WTC11 (cell line): ENCODE measurements at regions of chr2 and their contacts with region 1.

Region 1: GRCh38 chr2:30165050-30165520 is 18.3 kb downstream of the YPEL5 start:
- DNase-seq: peak; percentile 54
- ATAC-seq: peak; percentile 97
- H3K4me3 Mint-ChIP-seq: no peak overlapping the region
- H3K27ac Mint-ChIP-seq: no peak overlapping the region
- H3K4me1 Mint-ChIP-seq: peaks cover 22% of the 10 kb centered on the region
- H3K27me3 Mint-ChIP-seq: no peaks in the 10 kb centered on the region
- CTCF ChIP-seq: peak; percentile 73

Region 2: GRCh38 chr2:29902356-29902755 is 262.7 kb before region 1 on chr2:
- CTCF ChIA-PET with region 1: no interaction called
- POLR2A ChIA-PET with region 1: no interaction called
- DNase-seq: peak; percentile 32
- ATAC-seq: peak; percentile 61
- H3K4me3 Mint-ChIP-seq: no peak overlapping the region
- H3K27ac Mint-ChIP-seq: no peak overlapping the region
- H3K4me1 Mint-ChIP-seq: peaks cover 48% of the 10 kb centered on the region
- H3K27me3 Mint-ChIP-seq: peaks cover 27% of the 10 kb centered on the region
- CTCF ChIP-seq: no peak

Region 3: DNA sequence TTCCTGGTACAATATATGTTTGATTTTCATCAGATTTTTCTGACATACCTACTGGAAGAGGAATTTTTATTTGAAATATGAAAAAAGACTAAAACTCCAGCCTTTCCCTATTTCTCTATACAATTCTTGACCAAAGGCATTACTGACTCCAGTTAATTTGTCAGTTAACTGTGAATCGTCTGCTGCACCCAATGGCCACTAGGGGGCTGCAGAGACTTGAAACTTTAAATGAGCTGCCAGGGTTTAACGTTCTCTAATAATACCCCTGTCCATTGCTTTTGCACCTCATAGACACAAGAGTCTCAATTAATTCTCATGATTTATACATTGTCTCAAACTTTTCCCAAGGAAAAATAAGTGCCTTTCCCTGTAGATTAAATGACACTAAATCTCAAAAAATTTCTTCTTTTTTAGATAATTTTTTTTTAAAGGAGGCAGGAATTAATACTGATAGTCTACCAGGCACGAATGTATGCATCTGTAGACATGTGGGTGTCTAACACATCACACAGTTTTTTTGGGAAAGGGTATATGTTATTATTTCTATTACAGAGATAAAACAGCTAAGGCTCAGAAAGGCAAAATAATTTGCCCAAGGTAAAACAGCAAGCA is 241.9 kb before region 1 on chr2:
- CTCF ChIA-PET with region 1: no interaction called
- POLR2A ChIA-PET with region 1: no interaction called
- DNase-seq: peak; percentile 69
- ATAC-seq: no peak
- H3K4me3 Mint-ChIP-seq: no peak overlapping the region
- H3K27ac Mint-ChIP-seq: no peak overlapping the region
- H3K4me1 Mint-ChIP-seq: peaks cover 13% of the 10 kb centered on the region
- H3K27me3 Mint-ChIP-seq: peaks cover 41% of the 10 kb centered on the region
- CTCF ChIP-seq: peak; percentile 91

Region 4: DNA sequence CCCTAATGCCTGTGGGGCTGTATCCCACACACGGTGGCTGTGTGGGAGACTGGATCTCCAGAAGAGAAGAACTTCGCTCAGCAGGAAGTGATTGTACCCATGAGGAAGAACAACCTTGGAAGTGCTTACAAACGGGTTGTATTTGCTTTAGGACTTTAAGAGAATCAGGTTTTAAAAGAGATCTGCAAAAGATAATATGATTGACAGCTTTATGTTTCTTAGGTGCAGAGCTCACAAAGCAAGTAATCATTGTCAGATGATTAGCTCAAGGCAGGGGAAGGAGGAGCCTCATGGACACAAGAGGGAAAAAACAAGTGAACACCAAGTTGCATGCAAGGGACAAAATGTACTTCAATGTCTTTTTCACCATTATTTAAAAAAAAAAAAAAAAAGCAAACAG is 197.8 kb before region 1 on chr2:
- CTCF ChIA-PET with region 1: no interaction called
- POLR2A ChIA-PET with region 1: no interaction called
- DNase-seq: no peak
- ATAC-seq: no peak
- H3K4me3 Mint-ChIP-seq: no peak overlapping the region
- H3K27ac Mint-ChIP-seq: no peak overlapping the region
- H3K4me1 Mint-ChIP-seq: peaks cover 16% of the 10 kb centered on the region
- H3K27me3 Mint-ChIP-seq: peaks cover 3% of the 10 kb centered on the region; the same call in 1 of the 2 replicates
- CTCF ChIP-seq: no peak

Region 5: DNA sequence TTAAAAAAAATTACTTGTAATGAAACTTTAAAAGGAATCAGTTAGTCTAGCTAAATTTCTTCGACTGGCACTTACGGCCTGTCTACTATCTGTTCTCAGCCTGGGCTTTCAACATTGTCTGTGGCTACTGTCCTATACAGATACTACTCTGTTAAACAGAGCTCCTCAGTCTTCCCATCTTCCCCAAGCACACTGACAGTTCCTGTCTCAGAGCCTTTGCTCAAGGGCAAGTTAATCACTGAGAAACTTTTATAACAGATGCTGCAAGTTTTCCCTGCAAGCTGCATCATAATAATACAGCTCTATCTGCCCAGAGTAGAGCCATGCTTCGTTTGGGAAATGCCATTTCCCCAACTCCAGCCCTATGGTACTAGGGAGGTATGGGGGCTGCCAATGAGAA is 29.5 kb before region 1 on chr2:
- CTCF ChIA-PET with region 1: no interaction called
- POLR2A ChIA-PET with region 1: no interaction called
- DNase-seq: no peak
- ATAC-seq: no peak
- H3K4me3 Mint-ChIP-seq: no peak overlapping the region
- H3K27ac Mint-ChIP-seq: no peak overlapping the region
- H3K4me1 Mint-ChIP-seq: no peaks in the 10 kb centered on the region
- H3K27me3 Mint-ChIP-seq: peaks cover 2% of the 10 kb centered on the region; the same call in 1 of the 2 replicates
- CTCF ChIP-seq: no peak

Region 6: DNA sequence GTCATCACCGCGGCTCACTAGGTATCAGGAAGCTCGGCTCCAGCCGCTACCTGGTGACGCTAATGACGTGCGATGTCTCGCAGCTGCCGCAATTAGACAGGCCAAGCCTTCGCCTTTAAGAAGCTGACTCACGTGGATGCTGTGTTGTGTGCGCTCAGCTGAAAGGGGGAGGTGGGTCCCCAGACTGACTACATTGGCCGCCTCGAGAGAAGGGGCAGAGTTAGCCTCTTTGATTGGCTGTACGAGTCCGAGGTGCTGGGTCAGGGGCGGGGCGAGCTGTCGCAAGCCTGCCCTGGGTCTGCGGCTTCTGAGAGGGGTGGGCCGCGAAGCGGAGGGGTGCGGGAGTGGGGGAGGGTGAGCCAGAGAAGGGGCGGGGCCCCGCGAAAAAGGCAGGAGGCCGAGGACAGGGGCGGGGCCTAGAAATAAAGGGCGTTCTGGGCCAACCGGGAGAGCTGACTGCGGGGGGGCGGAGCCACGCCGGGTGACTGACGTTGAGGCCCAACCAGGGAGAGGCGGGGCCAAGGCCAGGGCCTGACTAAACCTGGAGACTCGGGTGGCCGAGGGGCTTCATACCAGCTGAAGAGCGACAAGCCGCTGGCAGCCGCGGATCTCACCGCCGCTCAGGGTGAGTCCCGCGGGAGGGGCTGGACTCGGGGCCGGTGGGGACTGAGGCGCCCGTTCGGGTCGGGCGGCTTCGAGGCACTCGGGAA is 18.5 kb before region 1 on chr2 and contains the start of gene YPEL5:
- CTCF ChIA-PET with region 1: interaction called, 113 read pairs
- POLR2A ChIA-PET with region 1: interaction called, 9 read pairs
- DNase-seq: peak; percentile 99
- ATAC-seq: peak; percentile 96
- H3K4me3 Mint-ChIP-seq: peak within 1 kb of the TSS; percentile 86
- H3K27ac Mint-ChIP-seq: peak within 1 kb of the TSS; percentile 92
- H3K4me1 Mint-ChIP-seq: peaks cover 41% of the 10 kb centered on the region
- H3K27me3 Mint-ChIP-seq: peaks cover 13% of the 10 kb centered on the region
- CTCF ChIP-seq: no peak
- total RNA-seq, gene YPEL5: 25.3 to 27.3 TPM (median 26.5 TPM) in 3 replicates

Region 7: DNA sequence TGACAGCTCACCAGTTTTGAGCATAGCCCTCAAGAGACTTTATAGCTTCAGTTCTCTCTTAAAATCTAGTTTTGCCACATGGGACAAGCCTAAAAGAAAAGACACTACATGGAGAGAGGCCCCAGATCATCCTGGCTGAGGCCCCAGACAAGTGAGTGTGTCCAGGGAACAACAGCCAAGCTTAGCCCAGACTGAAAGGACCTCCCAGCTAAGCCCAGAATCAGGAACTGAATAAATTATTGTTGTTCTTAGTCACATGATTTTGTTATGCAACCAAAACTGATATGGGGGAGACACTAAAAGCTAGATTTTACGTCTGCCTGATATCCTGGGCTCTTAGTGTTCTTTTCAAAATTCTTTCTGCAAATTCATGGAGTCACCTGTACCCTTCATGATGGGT is 36.9 kb after region 1 on chr2:
- CTCF ChIA-PET with region 1: interaction called, 40 read pairs
- POLR2A ChIA-PET with region 1: no interaction called
- DNase-seq: no peak
- ATAC-seq: no peak
- H3K4me3 Mint-ChIP-seq: no peak overlapping the region
- H3K27ac Mint-ChIP-seq: no peak overlapping the region
- H3K4me1 Mint-ChIP-seq: no peaks in the 10 kb centered on the region
- H3K27me3 Mint-ChIP-seq: no peaks in the 10 kb centered on the region
- CTCF ChIP-seq: no peak

Region 8: GRCh38 chr2:30231212-30231995 is 66.3 kb after region 1 on chr2 and contains the start of gene LBH:
- CTCF ChIA-PET with region 1: interaction called, 20 read pairs
- POLR2A ChIA-PET with region 1: interaction called, 3 read pairs
- DNase-seq: peak; percentile 65
- ATAC-seq: peak; percentile 52
- H3K4me3 Mint-ChIP-seq: peak within 1 kb of the TSS; percentile 83
- H3K27ac Mint-ChIP-seq: no peak within 1 kb of the TSS
- H3K4me1 Mint-ChIP-seq: peaks cover 31% of the 10 kb centered on the region
- H3K27me3 Mint-ChIP-seq: peaks cover 39% of the 10 kb centered on the region
- CTCF ChIP-seq: no peak
- total RNA-seq, gene LBH: 30.8 to 47.3 TPM (median 34.7 TPM) in 3 replicates

Region 9: GRCh38 chr2:30346471-30347169 is 181.5 kb after region 1 on chr2:
- CTCF ChIA-PET with region 1: interaction called, 12 read pairs
- POLR2A ChIA-PET with region 1: no interaction called
- DNase-seq: peak; percentile 65
- ATAC-seq: peak; percentile 100
- H3K4me3 Mint-ChIP-seq: peak overlapping the region; percentile 32
- H3K27ac Mint-ChIP-seq: no peak overlapping the region
- H3K4me1 Mint-ChIP-seq: peaks cover 14% of the 10 kb centered on the region
- H3K27me3 Mint-ChIP-seq: peaks cover 7% of the 10 kb centered on the region
- CTCF ChIP-seq: no peak

Region 10: DNA sequence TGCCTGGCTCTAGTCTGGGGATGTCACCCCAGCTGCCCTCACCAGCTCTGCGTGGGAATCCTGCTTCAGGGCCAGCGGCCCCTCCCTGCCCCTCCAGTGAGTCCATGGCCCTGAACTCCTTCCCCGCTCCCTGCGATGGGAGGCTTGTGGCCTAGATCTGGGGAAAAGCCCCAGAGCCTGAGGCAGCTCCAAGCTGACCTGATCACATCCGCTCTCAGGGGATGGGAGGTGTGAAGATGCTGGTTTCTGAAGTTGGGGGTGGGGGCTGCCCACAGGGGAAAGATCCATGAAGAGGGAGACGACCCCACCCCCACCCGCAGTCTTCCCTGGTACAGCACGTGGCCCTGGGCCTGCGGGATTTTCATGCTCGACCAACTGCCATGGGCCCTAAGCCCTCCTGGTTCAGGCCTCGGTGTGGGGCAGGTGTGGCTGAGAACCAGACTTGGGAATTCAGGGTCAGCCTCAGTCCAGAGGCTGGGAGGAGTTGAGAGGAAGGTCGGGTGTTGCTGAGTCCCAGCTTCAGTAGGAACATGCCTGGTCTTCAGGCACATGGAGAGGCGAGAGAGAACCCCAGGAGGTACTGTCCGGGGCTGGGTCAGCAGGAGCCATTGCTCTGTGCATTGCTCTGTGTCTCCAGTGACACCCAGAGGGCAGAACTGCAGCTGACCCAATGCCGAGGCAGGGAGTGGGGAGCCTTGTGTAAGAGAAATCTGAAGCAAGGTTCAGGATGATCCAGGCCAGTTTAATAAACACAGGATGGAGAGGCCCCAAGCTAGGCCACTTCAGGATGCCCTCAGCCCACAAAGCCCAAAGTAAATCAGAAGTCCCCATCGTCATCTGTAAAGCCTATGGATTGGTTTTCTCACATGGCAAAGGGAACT is 527.1 kb after region 1 on chr2:
- CTCF ChIA-PET with region 1: interaction called, 15 read pairs
- POLR2A ChIA-PET with region 1: no interaction called
- DNase-seq: no peak
- ATAC-seq: peak; percentile 54; the same call in 1 of the 2 replicates
- H3K4me3 Mint-ChIP-seq: no peak overlapping the region
- H3K27ac Mint-ChIP-seq: no peak overlapping the region
- H3K4me1 Mint-ChIP-seq: peaks cover 10% of the 10 kb centered on the region
- H3K27me3 Mint-ChIP-seq: no peaks in the 10 kb centered on the region
- CTCF ChIP-seq: no peak